ENCODE measurements at regions of chr7 and their contacts with region 1.

Region 1: DNA sequence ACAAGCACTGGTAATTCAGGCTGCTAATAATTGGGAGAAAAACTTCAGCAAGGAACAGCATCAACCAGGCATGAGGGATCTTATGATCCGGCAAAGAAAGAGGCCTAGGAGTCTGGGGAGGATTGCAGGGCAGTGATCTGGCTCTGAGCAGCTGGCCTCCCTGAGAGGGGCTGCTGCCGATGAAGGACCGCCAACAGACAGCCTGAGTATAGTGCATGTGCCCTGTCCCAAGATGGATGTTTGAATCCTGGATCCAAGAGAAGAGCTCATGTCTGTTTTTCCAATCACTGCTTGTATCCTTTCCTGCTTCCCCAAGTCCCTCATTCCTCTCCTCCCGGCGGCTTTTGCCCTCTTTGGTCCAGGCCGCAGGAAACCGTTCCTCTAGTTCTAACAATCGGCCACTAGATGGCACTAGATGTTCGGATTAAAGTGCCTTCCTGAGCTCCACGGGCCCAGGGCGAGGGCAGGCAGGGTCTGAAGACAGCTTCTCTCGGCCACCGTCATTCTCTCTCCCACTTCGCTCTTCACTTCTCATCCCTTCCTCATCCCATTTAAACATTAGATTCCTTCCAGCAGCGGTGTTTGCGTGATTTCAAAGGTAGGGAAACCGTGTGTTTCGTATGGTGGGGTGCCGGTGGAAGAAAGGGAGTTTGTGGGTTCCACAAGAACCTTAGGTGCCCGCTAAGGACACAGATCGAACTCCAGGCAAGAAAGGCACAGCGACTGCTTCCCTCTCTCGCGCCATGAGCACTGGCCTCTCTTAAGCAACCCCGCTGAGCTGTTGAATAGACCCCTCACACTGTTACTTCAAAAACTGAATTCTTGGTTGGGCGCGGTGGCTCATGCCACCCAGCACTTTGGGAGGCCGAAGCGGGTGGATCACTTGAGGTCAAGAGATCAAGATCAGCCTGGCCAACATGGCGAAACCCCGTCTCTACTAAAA is 82.4 kb downstream of the ADCYAP1R1 start:
- DNase-seq: peak; percentile 58 to 64
- H3K4me3 ChIP-seq: no peak overlapping the region
- H3K27ac ChIP-seq: no peak overlapping the region
- H3K4me1 ChIP-seq: no peaks in the 10 kb centered on the region
- H3K27me3 ChIP-seq: no peaks in the 10 kb centered on the region
- CTCF ChIP-seq: peak in 5 of 6 experiments; percentile 41 to 74 (median 65)
- POLR2A ChIP-seq: no peak

Region 2: GRCh38 chr7:31027161-31027965 is 107.2 kb before region 1 on chr7:
- intact Hi-C with region 1: no loop called
- DNase-seq: peak in 1 of 2 donors; percentile 11
- H3K4me3 ChIP-seq: no peak overlapping the region
- H3K27ac ChIP-seq: no peak overlapping the region
- H3K4me1 ChIP-seq: no peaks in the 10 kb centered on the region
- H3K27me3 ChIP-seq: no peaks in the 10 kb centered on the region
- CTCF ChIP-seq: no peak
- POLR2A ChIP-seq: no peak

Region 3: GRCh38 chr7:31261341-31261740 is 126.8 kb after region 1 on chr7:
- intact Hi-C with region 1: no loop called
- DNase-seq: no peak
- H3K4me3 ChIP-seq: no peak overlapping the region
- H3K27ac ChIP-seq: no peak overlapping the region
- H3K4me1 ChIP-seq: no peaks in the 10 kb centered on the region
- H3K27me3 ChIP-seq: no peaks in the 10 kb centered on the region
- CTCF ChIP-seq: no peak
- POLR2A ChIP-seq: no peak

Region 4: GRCh38 chr7:31735991-31736982 is 601.8 kb after region 1 on chr7:
- intact Hi-C with region 1: loop called (anchors 10 kb)
- DNase-seq: peak; percentile 27 to 49
- H3K4me3 ChIP-seq: no peak overlapping the region
- H3K27ac ChIP-seq: no peak overlapping the region
- H3K4me1 ChIP-seq: no peaks in the 10 kb centered on the region
- H3K27me3 ChIP-seq: no peaks in the 10 kb centered on the region
- CTCF ChIP-seq: peak; percentile 52 to 84 (median 64)
- POLR2A ChIP-seq: no peak

Measured in thyroid gland (tissue), 4 donors.